BJ (cell line): ENCODE measurements at regions of chr20 and their contacts with region 1.

Region 1: GRCh38 chr20:35292376-35293285 is at the start of gene FAM83C:
- DNase-seq: no peak
- H3K4me3 ChIP-seq: no peak within 1 kb of the TSS
- H3K27me3 ChIP-seq: peaks cover 4% of the 10 kb centered on the region
- CTCF ChIP-seq: no peak
- polyA plus RNA-seq, gene FAM83C: not detected in 2 replicates

Region 2: GRCh38 chr20:35030136-35030535 is 262.5 kb before region 1 on chr20:
- CTCF ChIA-PET with region 1: no interaction called
- POLR2A ChIA-PET with region 1: interaction called, 20 read pairs
- DNase-seq: no peak
- H3K4me3 ChIP-seq: no peak overlapping the region
- H3K27me3 ChIP-seq: no peaks in the 10 kb centered on the region
- CTCF ChIP-seq: no peak

Region 3: GRCh38 chr20:35277531-35278395 is 14.9 kb before region 1 on chr20 and contains the start of gene MMP24OS:
- CTCF ChIA-PET with region 1: no interaction called
- POLR2A ChIA-PET with region 1: no interaction called
- DNase-seq: peak; percentile 50
- H3K4me3 ChIP-seq: peak within 1 kb of the TSS; percentile 69
- H3K27me3 ChIP-seq: no peaks in the 10 kb centered on the region
- CTCF ChIP-seq: peak; percentile 64
- polyA plus RNA-seq, gene MMP24OS: 45.4 and 47.6 TPM in 2 replicates

Region 4: GRCh38 chr20:35463455-35464300 is 171.0 kb after region 1 on chr20:
- CTCF ChIA-PET with region 1: no interaction called
- POLR2A ChIA-PET with region 1: no interaction called
- DNase-seq: no peak
- H3K4me3 ChIP-seq: no peak overlapping the region
- H3K27me3 ChIP-seq: no peaks in the 10 kb centered on the region
- CTCF ChIP-seq: peak; percentile 75